CD4-positive, alpha-beta memory T cell (primary cell): ENCODE measurements at regions of chr18 and their contacts with region 1.

Region 1: GRCh38 chr18:23967321-23968089 is 47.0 kb upstream of the TTC39C start:
- DNase-seq: peak; percentile 32 to 60 (median 39)
- H3K4me3 ChIP-seq: peak overlapping the region in 1 of 2 donors; percentile 38
- H3K4me3 Mint-ChIP-seq: peak overlapping the region in 7 of 8 donors; percentile 60 to 87 (median 80)
- H3K27ac ChIP-seq: peak overlapping the region; percentile 17
- H3K27ac Mint-ChIP-seq: peak overlapping the region; percentile 89 to 99 (median 95)
- H3K4me1 ChIP-seq: peaks cover 90% of the 10 kb centered on the region
- H3K4me1 Mint-ChIP-seq: peaks cover 66 to 89% (median 81%) of the 10 kb centered on the region in 4 donors
- H3K27me3 ChIP-seq: no peaks in the 10 kb centered on the region
- H3K27me3 Mint-ChIP-seq: no peaks in the 10 kb centered on the region

Region 2: GRCh38 chr18:23994361-23994902 is 26.9 kb after region 1 on chr18:
- CTCF ChIA-PET with region 1: interaction called, 80 read pairs
- POLR2A ChIA-PET with region 1: interaction called, 155 read pairs
- intact Hi-C with region 1: loop called (anchors 1 kb)
- DNase-seq: peak; percentile 61 to 81 (median 66)
- H3K4me3 ChIP-seq: peak overlapping the region; percentile 49 to 70
- H3K4me3 Mint-ChIP-seq: peak overlapping the region; percentile 82 to 96 (median 91)
- H3K27ac ChIP-seq: peak overlapping the region; percentile 78
- H3K27ac Mint-ChIP-seq: peak overlapping the region; percentile 86 to 98 (median 96)
- H3K4me1 ChIP-seq: peaks cover 94% of the 10 kb centered on the region
- H3K4me1 Mint-ChIP-seq: peaks cover 49 to 91% (median 63%) of the 10 kb centered on the region in 4 donors
- H3K27me3 ChIP-seq: no peaks in the 10 kb centered on the region
- H3K27me3 Mint-ChIP-seq: no peaks in the 10 kb centered on the region

Region 3: GRCh38 chr18:24014062-24014985 is 46.8 kb after region 1 on chr18 and contains the start of gene TTC39C:
- CTCF ChIA-PET with region 1: interaction called, 9 read pairs
- POLR2A ChIA-PET with region 1: interaction called, 241 read pairs
- intact Hi-C with region 1: loop called (anchors 1 kb)
- DNase-seq: peak; percentile 78 to 88 (median 82)
- H3K4me3 ChIP-seq: peak within 1 kb of the TSS; percentile 73 to 83
- H3K4me3 Mint-ChIP-seq: peak within 1 kb of the TSS; percentile 92 to 100 (median 96)
- H3K27ac ChIP-seq: peak within 1 kb of the TSS; percentile 75
- H3K27ac Mint-ChIP-seq: peak within 1 kb of the TSS; percentile 90 to 98 (median 94)
- H3K4me1 ChIP-seq: peaks cover 77% of the 10 kb centered on the region
- H3K4me1 Mint-ChIP-seq: peaks cover 53 to 87% (median 64%) of the 10 kb centered on the region in 4 donors
- H3K27me3 ChIP-seq: no peaks in the 10 kb centered on the region
- H3K27me3 Mint-ChIP-seq: no peaks in the 10 kb centered on the region
- total RNA-seq, gene TTC39C: 168 to 180 TPM

Region 4: DNA sequence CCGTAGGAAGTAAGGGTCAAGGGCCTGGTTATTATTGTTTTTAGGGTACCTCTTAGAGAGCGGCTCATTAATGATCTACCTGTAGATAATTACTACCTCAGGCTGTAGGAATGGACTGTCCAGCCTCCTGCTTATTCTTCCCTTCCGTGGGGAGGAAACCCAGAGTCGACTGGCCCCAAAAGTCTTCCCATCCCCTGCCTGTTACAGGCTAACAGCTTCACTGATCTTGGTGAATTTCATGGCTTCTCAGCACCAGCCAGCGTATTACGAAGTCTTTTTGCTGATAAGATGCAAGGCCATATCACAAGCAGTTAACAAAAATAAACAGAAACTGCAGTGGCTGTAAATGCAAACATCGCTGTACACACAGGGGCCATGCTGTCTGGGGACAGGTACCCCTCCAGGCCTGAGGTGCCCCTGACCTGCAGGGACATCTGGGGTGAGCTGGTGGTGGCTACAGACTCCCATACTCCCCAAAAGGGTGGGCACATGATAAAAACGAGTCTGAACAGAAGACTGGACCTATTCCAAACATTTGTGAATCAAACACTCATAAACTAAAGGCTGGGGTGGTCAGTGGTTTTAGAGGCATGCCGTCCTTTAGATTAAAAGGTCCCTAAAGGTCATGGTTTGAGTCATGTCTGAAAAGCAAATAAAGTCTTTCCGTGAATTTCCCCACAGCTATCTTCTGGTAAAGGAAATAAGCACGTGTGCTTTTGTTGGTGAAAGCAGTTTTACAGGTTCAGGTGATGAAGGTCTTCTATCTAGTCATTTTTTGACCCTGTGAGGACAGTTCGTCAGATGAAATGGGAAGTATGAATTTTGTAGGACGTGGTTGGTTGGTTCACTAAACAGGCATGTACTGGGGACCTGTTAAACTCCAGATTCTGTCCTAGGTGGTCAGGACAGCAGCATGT is 83.8 kb after region 1 on chr18:
- CTCF ChIA-PET with region 1: no interaction called
- POLR2A ChIA-PET with region 1: no interaction called
- intact Hi-C with region 1: loop called (anchors 1 kb)
- DNase-seq: no peak
- H3K4me3 ChIP-seq: peak overlapping the region in 1 of 2 donors; percentile 1
- H3K4me3 Mint-ChIP-seq: peak overlapping the region in 7 of 8 donors; percentile 36 to 71 (median 54)
- H3K27ac ChIP-seq: peak overlapping the region; percentile 28
- H3K27ac Mint-ChIP-seq: peak overlapping the region; percentile 51 to 92 (median 80)
- H3K4me1 ChIP-seq: peaks cover 100% of the 10 kb centered on the region
- H3K4me1 Mint-ChIP-seq: peaks cover 63 to 95% (median 75%) of the 10 kb centered on the region in 4 donors
- H3K27me3 ChIP-seq: no peaks in the 10 kb centered on the region
- H3K27me3 Mint-ChIP-seq: no peaks in the 10 kb centered on the region

Region 5: DNA sequence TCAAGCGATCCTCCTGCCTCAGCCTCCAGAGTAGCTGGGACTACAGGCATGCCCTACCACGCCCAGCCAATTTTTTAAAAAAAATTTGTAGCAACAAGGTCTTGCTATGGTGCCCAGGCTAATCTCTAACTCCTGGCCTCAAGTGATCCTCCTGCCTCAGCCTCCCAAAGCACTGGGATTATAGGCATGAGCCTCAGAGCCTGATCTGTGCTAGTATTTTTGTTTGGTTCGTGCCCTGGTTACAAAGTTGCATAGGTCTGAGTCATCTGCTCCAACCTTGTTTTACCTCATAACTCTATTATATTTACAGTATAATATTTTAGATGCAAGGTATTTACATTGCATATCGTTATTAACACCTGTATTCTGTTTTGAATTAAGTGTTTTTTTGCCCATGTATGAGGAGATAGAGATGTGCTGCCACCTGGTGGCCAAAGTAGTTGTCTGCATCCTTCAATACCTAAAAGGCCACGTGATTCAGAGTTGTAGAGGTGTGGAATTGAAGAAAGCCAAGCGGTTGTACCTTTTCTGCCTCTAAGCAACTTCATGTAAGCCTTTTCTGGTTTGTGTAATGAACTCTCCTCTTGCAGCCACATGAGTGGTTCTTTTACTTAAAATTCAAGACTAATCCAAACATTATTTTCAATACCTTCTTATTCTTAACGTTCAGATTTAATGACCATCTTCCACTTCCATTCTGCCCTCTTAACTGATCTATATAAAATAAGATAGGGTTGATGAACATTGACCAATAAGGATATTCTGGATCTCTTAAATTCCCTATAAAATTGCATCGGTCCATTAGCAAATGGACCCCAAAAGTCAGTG is 151.5 kb after region 1 on chr18:
- CTCF ChIA-PET with region 1: interaction called, 5 read pairs
- POLR2A ChIA-PET with region 1: interaction called, 4 read pairs
- intact Hi-C with region 1: loop called (anchors 1 kb)
- DNase-seq: peak; percentile 72 to 78 (median 76)
- H3K4me3 ChIP-seq: no peak overlapping the region
- H3K4me3 Mint-ChIP-seq: no peak overlapping the region
- H3K27ac ChIP-seq: no peak overlapping the region
- H3K27ac Mint-ChIP-seq: peak overlapping the region; percentile 37 to 79 (median 50)
- H3K4me1 ChIP-seq: peaks cover 16% of the 10 kb centered on the region
- H3K4me1 Mint-ChIP-seq: peaks cover 16 to 31% (median 23%) of the 10 kb centered on the region in 4 donors
- H3K27me3 ChIP-seq: no peaks in the 10 kb centered on the region
- H3K27me3 Mint-ChIP-seq: no peaks in the 10 kb centered on the region